Head of caudate nucleus (tissue), 42 donors: ENCODE measurements at regions of chr7 and their contacts with region 1.

Region 1: GRCh38 chr7:82017334-82017943 is 247.6 kb upstream of the HGF start:
- DNase-seq: peak in 1 of 42 donors; percentile 41

Region 2: DNA sequence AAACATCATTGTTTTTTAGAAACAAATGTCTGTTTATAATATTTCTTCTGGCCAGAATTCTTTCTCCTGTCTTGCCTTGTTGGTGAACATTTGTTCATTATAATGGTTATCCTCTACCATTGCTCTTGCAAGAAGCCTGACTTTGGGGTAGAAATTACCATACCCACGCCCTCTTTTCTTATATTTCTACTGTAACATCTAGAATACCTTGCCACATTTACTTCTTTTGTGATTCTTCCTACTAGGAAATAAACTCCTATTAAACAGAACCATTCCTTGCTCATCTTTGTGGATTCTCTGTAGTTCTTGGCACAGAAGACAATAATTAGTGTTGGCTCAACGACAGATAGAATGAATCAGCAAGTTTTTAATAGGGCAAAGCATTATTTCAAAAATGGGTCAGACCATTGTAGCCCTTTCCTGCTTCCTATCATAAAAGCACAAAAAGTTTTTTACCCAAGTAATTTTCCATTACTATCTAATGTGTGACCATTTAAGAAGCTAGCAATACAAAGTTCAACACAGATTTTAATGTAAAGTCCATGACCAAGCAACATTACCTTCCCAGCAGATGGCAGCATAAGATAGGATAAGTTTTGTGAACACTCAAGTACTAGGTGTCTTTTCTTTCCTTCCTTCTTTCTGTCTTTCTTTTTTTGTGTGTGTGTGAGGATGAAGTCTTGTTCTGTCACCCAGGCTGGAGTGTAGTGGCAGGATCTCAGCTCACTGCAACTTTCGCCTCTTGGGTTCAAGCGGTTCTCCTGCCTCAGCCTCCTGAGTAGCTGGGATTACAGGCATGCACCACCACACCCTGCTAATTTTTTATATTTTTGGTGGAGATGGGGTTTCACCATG is 518.0 kb before region 1 on chr7:
- intact Hi-C with region 1: loop called (anchors 5 kb)
- DNase-seq: peak in 16 of 42 donors; percentile 8 to 71 (median 48)